ENCODE measurements at regions of chr6 and their contacts with region 1.

Region 1: DNA sequence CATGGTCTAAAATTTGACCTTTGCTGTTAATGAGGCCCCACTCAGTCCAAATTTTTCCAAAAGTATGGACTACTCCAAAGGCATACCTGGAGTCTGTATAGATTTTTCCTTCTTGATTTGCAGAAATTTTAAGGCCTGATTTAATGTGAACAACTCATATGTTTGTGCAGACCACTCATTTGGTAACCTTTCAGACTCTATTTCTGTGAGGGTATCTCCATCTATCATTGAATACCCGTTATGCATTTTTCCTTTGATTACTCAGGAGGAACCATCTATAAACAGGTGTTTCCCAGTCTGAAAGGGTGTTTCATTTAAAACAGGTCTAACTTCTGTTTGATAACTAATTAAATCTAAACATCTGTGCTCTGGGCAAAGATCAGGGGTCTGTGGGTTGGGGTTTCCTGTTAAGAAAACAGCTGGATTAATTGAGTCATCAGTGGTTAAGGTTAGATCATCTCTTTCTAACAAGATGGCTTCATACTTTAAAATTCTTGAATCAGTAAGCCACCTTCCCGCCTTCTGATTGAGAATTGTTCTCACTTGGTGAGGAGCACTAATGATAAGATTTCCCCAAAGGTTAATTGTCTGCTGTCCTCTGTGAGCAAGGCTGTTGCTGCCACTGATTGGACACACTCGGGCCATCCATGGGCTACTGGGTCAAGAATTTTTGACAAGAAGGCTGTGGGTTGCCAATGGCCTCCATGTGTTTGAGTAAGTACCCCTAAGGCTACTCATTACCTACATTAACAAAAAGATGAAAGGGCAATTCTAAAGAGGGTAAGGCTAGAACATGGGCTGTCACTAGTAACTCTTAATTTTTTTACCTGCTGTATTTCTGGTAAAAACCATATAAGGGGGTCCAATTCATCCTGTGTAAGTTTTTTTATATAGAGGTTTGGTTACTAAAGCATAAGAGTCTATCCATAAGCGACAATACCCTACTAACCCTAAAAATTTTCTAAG is 24.1 kb downstream of the HLA-B start:
- DNase-seq: no peak
- H3K4me3 ChIP-seq: no peak overlapping the region
- H3K27ac ChIP-seq: no peak overlapping the region
- H3K4me1 ChIP-seq: no peaks in the 10 kb centered on the region
- H3K27me3 ChIP-seq: no peaks in the 10 kb centered on the region
- CTCF ChIP-seq: no peak

Region 2: GRCh38 chr6:31239854-31240253 is 93.1 kb before region 1 on chr6:
- CTCF ChIA-PET with region 1: no interaction called
- dilution Hi-C with region 1: loop called (anchors 10 kb)
- in situ Hi-C with region 1: no loop called
- intact Hi-C with region 1: no loop called
- DNase-seq: no peak
- H3K4me3 ChIP-seq: no peak overlapping the region
- H3K27ac ChIP-seq: no peak overlapping the region
- H3K4me1 ChIP-seq: peaks cover 5% of the 10 kb centered on the region
- H3K27me3 ChIP-seq: peaks cover 2% of the 10 kb centered on the region
- CTCF ChIP-seq: no peak

Region 3: DNA sequence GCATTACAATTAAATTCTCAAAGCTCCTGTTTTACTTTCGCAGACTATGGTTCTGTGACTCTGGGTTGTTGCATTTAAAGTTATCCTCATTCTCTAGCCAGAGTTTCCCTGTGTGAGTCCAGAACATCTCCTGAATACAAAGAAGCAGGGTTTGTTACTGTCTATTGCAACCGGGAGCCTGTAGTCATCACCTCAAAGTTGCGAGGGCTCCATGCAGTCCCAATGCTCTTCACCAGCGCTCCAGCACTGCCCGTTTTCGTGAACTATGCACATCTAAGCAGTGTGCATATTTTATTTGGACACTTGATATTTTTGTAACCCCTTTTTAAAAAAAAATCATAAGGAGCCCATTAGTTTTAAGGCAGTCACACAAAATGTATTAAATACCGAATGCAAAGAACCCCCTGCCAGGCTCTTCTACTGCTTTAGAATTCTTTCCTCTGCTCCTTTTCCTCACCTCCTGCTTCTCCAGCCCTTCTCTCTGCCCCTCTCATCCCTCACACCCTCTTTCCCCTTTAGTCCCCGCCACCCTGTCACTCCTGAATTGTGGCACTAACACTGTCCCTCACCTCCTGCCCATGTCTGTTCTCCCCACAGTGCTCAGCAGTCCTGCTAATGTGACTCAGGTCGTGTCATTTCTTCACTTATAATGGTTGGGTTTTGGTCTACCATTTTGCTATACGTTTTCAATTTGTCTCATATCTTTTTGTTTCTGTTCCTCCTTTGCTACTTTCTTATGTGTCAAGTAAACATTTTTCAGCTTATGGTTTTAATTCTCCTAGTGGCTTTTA is 59.9 kb before region 1 on chr6:
- CTCF ChIA-PET with region 1: no interaction called
- dilution Hi-C with region 1: no loop called
- in situ Hi-C with region 1: no loop called
- intact Hi-C with region 1: no loop called
- DNase-seq: no peak
- H3K4me3 ChIP-seq: no peak overlapping the region
- H3K27ac ChIP-seq: no peak overlapping the region
- H3K4me1 ChIP-seq: peaks cover 5% of the 10 kb centered on the region
- H3K27me3 ChIP-seq: peaks cover 6% of the 10 kb centered on the region
- CTCF ChIP-seq: no peak

Region 4: GRCh38 chr6:31383149-31383548 is 50.2 kb after region 1 on chr6:
- CTCF ChIA-PET with region 1: no interaction called
- dilution Hi-C with region 1: loop called (anchors 5 kb)
- in situ Hi-C with region 1: no loop called
- intact Hi-C with region 1: no loop called
- DNase-seq: peak; percentile 64
- H3K4me3 ChIP-seq: no peak overlapping the region
- H3K27ac ChIP-seq: no peak overlapping the region
- H3K4me1 ChIP-seq: no peaks in the 10 kb centered on the region
- H3K27me3 ChIP-seq: peaks cover 2% of the 10 kb centered on the region
- CTCF ChIP-seq: no peak